IMR-90 (cell line): ENCODE measurements at regions of chr18 and their contacts with region 1.

Region 1: DNA sequence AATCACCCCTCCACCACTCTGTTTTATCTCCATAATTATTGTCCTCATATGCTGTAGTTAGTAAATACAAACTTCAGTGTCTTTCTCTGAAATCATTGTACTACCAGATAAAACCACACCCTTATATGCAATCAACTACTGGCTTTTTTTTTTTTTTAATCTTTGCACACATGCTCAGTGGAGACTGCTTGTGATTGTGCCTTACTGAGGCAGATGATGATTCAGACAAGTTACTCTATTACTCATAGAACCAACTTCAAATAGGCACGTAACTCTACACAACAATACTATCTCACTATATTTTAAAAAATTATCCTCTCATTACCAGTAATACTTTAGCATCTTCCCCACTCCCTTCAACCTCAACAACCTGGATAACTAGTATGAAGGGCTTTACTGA is 1278.4 kb upstream of the PIK3C3 start:
- DNase-seq: peak; percentile 41
- ATAC-seq: no peak
- H3K4me3 ChIP-seq: no peak overlapping the region
- H3K27ac ChIP-seq: no peak overlapping the region
- H3K4me1 ChIP-seq: no peaks in the 10 kb centered on the region
- H3K27me3 ChIP-seq: no peaks in the 10 kb centered on the region
- CTCF ChIP-seq: no peak
- POLR2A ChIP-seq: no peak
- RAD21 ChIP-seq: no peak

Region 2: GRCh38 chr18:40687399-40687798 is 10.7 kb after region 1 on chr18:
- CTCF ChIA-PET with region 1: no interaction called
- POLR2A ChIA-PET with region 1: no interaction called
- dilution Hi-C with region 1: no loop called
- in situ Hi-C with region 1: no loop called
- intact Hi-C with region 1: loop called (anchors 1 kb)
- DNase-seq: no peak
- ATAC-seq: no peak
- H3K4me3 ChIP-seq: no peak overlapping the region
- H3K27ac ChIP-seq: no peak overlapping the region
- H3K4me1 ChIP-seq: no peaks in the 10 kb centered on the region
- H3K27me3 ChIP-seq: no peaks in the 10 kb centered on the region
- CTCF ChIP-seq: no peak
- POLR2A ChIP-seq: no peak
- RAD21 ChIP-seq: no peak

Region 3: DNA sequence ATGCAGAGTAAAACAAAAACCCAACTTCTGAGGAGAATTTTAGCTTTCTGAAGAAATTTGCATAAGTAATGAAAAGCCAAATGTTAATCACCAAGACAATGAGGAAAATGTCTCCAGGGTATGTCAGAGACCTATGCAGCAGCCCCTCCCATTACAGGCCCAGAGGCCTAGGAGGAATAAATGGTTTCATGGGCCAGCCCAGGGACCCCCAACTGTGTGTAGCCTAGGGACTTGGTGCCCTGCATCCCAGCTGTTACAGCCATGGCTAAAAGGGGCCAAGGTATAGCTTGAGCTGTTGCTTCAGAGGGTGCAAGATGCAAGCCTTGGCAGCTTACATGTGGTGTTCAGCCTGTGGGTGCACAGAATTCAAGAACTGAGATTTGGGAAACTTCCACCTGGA is 21.5 kb after region 1 on chr18:
- CTCF ChIA-PET with region 1: no interaction called
- POLR2A ChIA-PET with region 1: no interaction called
- dilution Hi-C with region 1: no loop called
- in situ Hi-C with region 1: no loop called
- intact Hi-C with region 1: no loop called
- DNase-seq: no peak
- ATAC-seq: no peak
- H3K4me3 ChIP-seq: no peak overlapping the region
- H3K27ac ChIP-seq: no peak overlapping the region
- H3K4me1 ChIP-seq: no peaks in the 10 kb centered on the region
- H3K27me3 ChIP-seq: no peaks in the 10 kb centered on the region; the same call in 1 of the 2 replicates
- CTCF ChIP-seq: no peak
- POLR2A ChIP-seq: no peak
- RAD21 ChIP-seq: no peak

Region 4: DNA sequence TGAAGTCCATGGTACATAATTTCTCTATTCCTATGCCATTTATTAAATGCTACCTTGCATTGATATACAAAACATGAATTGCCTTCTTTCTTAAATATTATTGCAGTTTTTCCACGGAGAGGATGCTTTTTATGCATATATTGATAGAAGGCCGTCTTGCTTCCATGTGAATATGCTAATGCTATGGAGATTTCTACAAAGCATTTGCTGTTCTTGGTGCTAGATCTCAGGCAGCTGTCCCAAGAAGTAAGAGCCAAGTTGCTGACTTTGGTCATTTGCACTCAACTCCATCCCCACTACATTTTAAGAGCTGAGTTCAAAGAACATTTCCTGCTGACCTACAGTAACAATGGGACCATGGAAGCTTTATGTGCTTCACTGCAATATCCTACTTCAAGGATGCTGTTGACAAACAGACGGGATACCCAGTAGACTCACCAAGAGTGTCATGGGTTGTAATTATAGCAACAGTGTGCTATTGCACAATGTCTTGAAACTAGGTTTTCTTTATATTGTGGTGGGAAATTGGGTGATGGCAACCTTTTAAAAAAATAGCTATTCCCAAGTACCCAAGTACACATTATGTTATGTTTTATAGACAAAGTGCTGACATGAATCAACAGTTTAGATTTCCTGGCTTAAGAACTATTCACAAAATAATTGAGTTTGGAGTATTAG is 105.9 kb after region 1 on chr18:
- CTCF ChIA-PET with region 1: no interaction called
- POLR2A ChIA-PET with region 1: no interaction called
- dilution Hi-C with region 1: no loop called
- in situ Hi-C with region 1: no loop called
- intact Hi-C with region 1: no loop called
- DNase-seq: no peak
- ATAC-seq: no peak
- H3K4me3 ChIP-seq: no peak overlapping the region
- H3K27ac ChIP-seq: no peak overlapping the region
- H3K4me1 ChIP-seq: no peaks in the 10 kb centered on the region
- H3K27me3 ChIP-seq: no peaks in the 10 kb centered on the region
- CTCF ChIP-seq: no peak
- POLR2A ChIP-seq: no peak
- RAD21 ChIP-seq: no peak